ENCODE measurements at regions of chr15 and their contacts with region 1.

Region 1: GRCh38 chr15:81410318-81410753 is 36.3 kb upstream of the TMC3 start:
- DNase-seq: peak; percentile 50
- ATAC-seq: peak; percentile 85
- H3K4me3 ChIP-seq: no peak overlapping the region
- H3K27ac ChIP-seq: no peak overlapping the region
- H3K4me1 ChIP-seq: no peaks in the 10 kb centered on the region
- H3K27me3 ChIP-seq: peaks cover 25% of the 10 kb centered on the region
- CTCF ChIP-seq: peak; percentile 71

Region 2: DNA sequence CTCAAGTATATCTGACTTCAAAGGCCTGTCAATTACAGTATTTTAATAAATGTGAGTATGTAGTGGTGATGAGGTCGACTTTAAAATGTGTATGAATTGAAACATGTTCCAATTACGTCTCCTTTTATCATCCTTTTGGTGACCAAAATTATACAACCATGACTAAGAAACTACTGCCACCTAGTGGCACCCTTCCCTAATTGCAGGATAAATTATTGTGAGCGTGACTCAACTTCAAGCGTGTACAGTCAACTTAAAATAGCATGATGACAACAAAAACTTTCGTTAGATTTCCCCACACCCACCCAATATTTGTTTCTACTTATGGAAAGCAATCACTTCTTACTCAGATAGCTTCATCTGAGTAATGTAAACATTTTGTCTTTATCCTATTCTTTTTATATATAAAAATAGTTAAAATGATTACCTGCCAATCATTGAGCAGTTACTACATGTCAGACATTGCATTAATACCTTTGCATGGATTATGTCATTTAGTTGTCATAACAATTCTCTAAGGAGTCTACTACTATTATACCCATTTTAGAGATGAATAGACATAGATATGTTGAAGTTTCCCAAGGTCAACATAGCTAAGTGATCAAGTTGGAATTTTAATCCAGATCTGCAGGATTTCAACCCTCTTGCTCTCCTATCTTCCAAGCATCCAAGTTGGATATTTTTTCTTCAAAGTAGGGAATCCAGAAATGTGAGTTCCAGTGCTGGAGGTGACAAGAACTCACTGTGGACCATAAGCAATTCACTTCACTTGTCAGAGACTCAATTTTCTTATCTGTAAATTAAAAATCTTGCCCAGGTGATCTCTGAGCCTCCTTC is 529.5 kb after region 1 on chr15:
- CTCF ChIA-PET with region 1: no interaction called
- POLR2A ChIA-PET with region 1: no interaction called
- in situ Hi-C with region 1: no loop called
- intact Hi-C with region 1: loop called (anchors 2 kb)
- DNase-seq: peak; percentile 8
- ATAC-seq: no peak
- H3K4me3 ChIP-seq: no peak overlapping the region
- H3K27ac ChIP-seq: no peak overlapping the region
- H3K4me1 ChIP-seq: no peaks in the 10 kb centered on the region
- H3K27me3 ChIP-seq: no peaks in the 10 kb centered on the region
- CTCF ChIP-seq: peak; percentile 76; the same call in 1 of the 2 replicates

Region 3: DNA sequence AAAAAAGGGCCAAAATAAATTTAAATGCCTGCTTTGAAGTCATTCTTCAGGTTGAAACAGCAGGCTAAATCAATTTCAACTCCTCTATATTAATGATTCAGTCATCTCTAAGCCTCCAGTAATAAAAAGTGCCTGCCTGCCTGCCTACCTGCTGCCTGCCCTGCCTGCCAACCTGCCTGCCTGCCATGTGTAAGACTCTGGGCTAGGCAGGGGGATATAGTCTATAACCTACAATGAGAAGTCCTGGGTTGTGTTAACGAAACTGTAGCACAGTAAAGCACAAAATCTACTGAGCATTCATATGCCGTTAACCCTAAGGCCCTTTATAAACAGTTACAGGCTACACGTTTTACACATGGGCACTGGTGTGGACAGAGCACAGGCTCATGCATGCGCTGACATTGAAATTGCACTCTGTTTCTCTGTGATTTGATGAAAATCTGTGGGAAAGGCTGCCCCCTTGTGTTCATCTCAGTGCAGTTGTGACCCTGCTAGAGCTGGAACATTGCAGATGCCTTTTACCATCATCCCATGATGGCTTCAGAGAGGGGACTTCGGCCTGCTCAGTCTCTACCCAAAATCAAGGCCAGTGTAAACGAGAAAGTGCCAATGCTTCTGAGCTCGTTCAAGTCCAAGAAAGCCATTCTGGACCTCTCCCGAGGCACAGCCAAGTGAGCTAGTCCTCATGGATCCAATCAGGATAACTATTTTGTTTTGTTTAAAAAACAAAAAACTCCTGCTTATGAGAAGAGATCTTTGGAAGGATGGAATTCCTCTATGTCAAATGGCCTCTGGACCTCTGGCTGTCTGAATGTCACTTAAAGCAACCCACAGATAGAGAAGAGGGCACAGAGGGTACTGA is 787.6 kb after region 1 on chr15:
- CTCF ChIA-PET with region 1: no interaction called
- POLR2A ChIA-PET with region 1: no interaction called
- in situ Hi-C with region 1: no loop called
- intact Hi-C with region 1: loop called (anchors 5 kb)
- DNase-seq: peak; percentile 52
- ATAC-seq: peak; percentile 100
- H3K4me3 ChIP-seq: no peak overlapping the region
- H3K27ac ChIP-seq: no peak overlapping the region
- H3K4me1 ChIP-seq: no peaks in the 10 kb centered on the region
- H3K27me3 ChIP-seq: no peaks in the 10 kb centered on the region
- CTCF ChIP-seq: peak; percentile 86